Activated CD4-positive, alpha-beta memory T cell treated with anti-CD3 and anti-CD28 coated beads for 36 hours (primary cell): ENCODE measurements at regions of chr1 and their contacts with region 1.

Region 1: GRCh38 chr1:32619701-32620485 is 30.5 kb downstream of the ZBTB8OS start:
- DNase-seq: peak; percentile 28
- H3K4me3 Mint-ChIP-seq: no peak overlapping the region
- H3K27ac Mint-ChIP-seq: no peak overlapping the region
- H3K4me1 Mint-ChIP-seq: peaks cover 33% of the 10 kb centered on the region
- H3K27me3 Mint-ChIP-seq: no peaks in the 10 kb centered on the region

Region 2: GRCh38 chr1:32684167-32684811 is 64.4 kb after region 1 on chr1:
- CTCF ChIA-PET with region 1: no interaction called
- POLR2A ChIA-PET with region 1: no interaction called
- intact Hi-C with region 1: loop called (anchors 5 kb)
- DNase-seq: no peak
- H3K4me3 Mint-ChIP-seq: no peak overlapping the region
- H3K27ac Mint-ChIP-seq: peak overlapping the region; percentile 61
- H3K4me1 Mint-ChIP-seq: peaks cover 14% of the 10 kb centered on the region
- H3K27me3 Mint-ChIP-seq: no peaks in the 10 kb centered on the region

Region 3: GRCh38 chr1:32801096-32801715 is 181.3 kb after region 1 on chr1:
- CTCF ChIA-PET with region 1: no interaction called
- POLR2A ChIA-PET with region 1: no interaction called
- intact Hi-C with region 1: loop called (anchors 1 kb)
- DNase-seq: peak; percentile 58
- H3K4me3 Mint-ChIP-seq: peak overlapping the region; percentile 13
- H3K27ac Mint-ChIP-seq: peak overlapping the region; percentile 74
- H3K4me1 Mint-ChIP-seq: peaks cover 56% of the 10 kb centered on the region
- H3K27me3 Mint-ChIP-seq: no peaks in the 10 kb centered on the region